Heart left ventricle (tissue), 16 donors: ENCODE measurements at regions of chr4 and their contacts with region 1.

Region 1: GRCh38 chr4:113106108-113106507 is 56.7 kb downstream of the ANK2 start:
- DNase-seq: no peak
- ATAC-seq: peak in 2 of 4 donors; percentile 32 to 39
- H3K4me3 ChIP-seq: no peak overlapping the region
- H3K27ac ChIP-seq: no peak overlapping the region
- H3K4me1 ChIP-seq: peaks cover 0 to 14% (median 0%) of the 10 kb centered on the region in 12 donors
- H3K27me3 ChIP-seq: no peaks in the 10 kb centered on the region
- CTCF ChIP-seq: peak in 11 of 12 donors; percentile 10 to 60 (median 41)
- POLR2A ChIP-seq: no peak

Region 2: GRCh38 chr4:113179996-113180395 is 73.9 kb after region 1 on chr4:
- intact Hi-C with region 1: loop called in 4 of 10 experiments (anchors 5 to 10 kb)
- DNase-seq: no peak
- ATAC-seq: peak in 3 of 4 donors; percentile 37 to 54 (median 41)
- H3K4me3 ChIP-seq: no peak overlapping the region
- H3K27ac ChIP-seq: peak overlapping the region in 8 of 12 donors; percentile 1 to 50 (median 13)
- H3K4me1 ChIP-seq: peaks cover 0 to 60% (median 19%) of the 10 kb centered on the region in 12 donors
- H3K27me3 ChIP-seq: no peaks in the 10 kb centered on the region
- CTCF ChIP-seq: no peak
- POLR2A ChIP-seq: no peak

Region 3: GRCh38 chr4:113248320-113248719 is 142.2 kb after region 1 on chr4:
- intact Hi-C with region 1: loop called in 6 of 10 experiments (anchors 5 to 10 kb)
- DNase-seq: no peak
- ATAC-seq: no peak
- H3K4me3 ChIP-seq: no peak overlapping the region
- H3K27ac ChIP-seq: no peak overlapping the region
- H3K4me1 ChIP-seq: no peaks in the 10 kb centered on the region
- H3K27me3 ChIP-seq: no peaks in the 10 kb centered on the region
- CTCF ChIP-seq: peak in 5 of 12 donors; percentile 7 to 28 (median 20)
- POLR2A ChIP-seq: no peak

Region 4: GRCh38 chr4:113256946-113257345 is 150.8 kb after region 1 on chr4:
- intact Hi-C with region 1: loop called in 1 of 10 experiments (anchors 10 kb)
- DNase-seq: no peak
- ATAC-seq: no peak
- H3K4me3 ChIP-seq: no peak overlapping the region
- H3K27ac ChIP-seq: no peak overlapping the region
- H3K4me1 ChIP-seq: peaks cover 0 to 6% (median 0%) of the 10 kb centered on the region in 12 donors
- H3K27me3 ChIP-seq: no peaks in the 10 kb centered on the region
- CTCF ChIP-seq: no peak
- POLR2A ChIP-seq: no peak

Region 5: GRCh38 chr4:113278324-113278934 is 172.3 kb after region 1 on chr4:
- intact Hi-C with region 1: loop called in 1 of 10 experiments (anchors 10 kb)
- DNase-seq: peak; percentile 63 to 77 (median 73)
- ATAC-seq: peak; percentile 68 to 92 (median 83)
- H3K4me3 ChIP-seq: no peak overlapping the region
- H3K27ac ChIP-seq: no peak overlapping the region
- H3K4me1 ChIP-seq: peaks cover 0 to 22% (median 0%) of the 10 kb centered on the region in 12 donors
- H3K27me3 ChIP-seq: no peaks in the 10 kb centered on the region
- CTCF ChIP-seq: peak; percentile 63 to 92 (median 78)
- POLR2A ChIP-seq: no peak

Region 6: GRCh38 chr4:113547487-113548042 is 441.5 kb after region 1 on chr4:
- intact Hi-C with region 1: no loop called
- DNase-seq: peak; percentile 83 to 90 (median 86)
- ATAC-seq: peak; percentile 94 to 99 (median 98)
- H3K4me3 ChIP-seq: no peak overlapping the region
- H3K27ac ChIP-seq: peak overlapping the region in 11 of 12 donors; percentile 23 to 75 (median 56)
- H3K4me1 ChIP-seq: peaks cover 0 to 19% (median 12%) of the 10 kb centered on the region in 12 donors
- H3K27me3 ChIP-seq: no peaks in the 10 kb centered on the region
- CTCF ChIP-seq: peak; percentile 91 to 99 (median 97)
- POLR2A ChIP-seq: no peak